ENCODE measurements at regions of chr15 and their contacts with region 1.

Region 1: GRCh38 chr15:99076552-99077308 is 28.1 kb upstream of the SYNM start:
- DNase-seq: peak; percentile 78

Region 2: GRCh38 chr15:98442379-98442833 is 634.3 kb before region 1 on chr15:
- intact Hi-C with region 1: loop called in 1 of 2 experiments (anchors 10 kb)
- DNase-seq: no peak

Region 3: DNA sequence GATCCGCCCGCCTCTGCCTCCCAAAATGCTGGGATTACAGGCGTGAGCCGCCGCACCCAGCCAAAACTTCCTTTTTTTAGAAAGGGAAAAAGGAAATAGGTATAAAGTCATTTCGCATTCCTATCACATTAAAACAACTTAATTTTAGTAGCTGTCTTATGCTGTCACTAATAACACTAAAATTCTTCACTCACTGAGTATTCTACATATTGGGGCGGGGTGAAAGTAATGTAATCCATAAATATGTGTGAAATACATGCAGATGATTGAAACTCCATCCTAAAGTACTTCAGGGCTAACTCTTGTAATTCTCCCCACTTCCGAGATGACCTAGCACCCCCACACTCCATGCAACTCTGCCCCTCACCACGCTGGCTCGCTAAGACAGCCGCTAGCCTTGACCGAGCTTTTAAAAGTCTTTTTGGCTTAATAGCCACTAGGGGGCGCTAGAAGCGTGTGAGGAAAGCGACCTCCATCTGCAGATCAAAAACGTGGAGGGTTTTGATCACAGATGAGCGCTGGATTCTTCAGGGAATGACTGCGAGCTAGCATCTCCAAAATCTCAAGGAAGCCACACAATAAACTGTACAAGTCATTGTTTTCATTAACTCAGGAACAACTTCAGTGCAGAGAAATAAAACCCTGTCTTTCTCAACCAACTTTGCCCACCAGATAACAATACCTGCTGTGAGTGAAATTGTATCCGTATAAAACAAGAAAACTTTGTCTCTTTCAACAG is 557.7 kb before region 1 on chr15:
- intact Hi-C with region 1: loop called (anchors 5 to 10 kb)
- DNase-seq: peak; percentile 72

Region 4: GRCh38 chr15:98525661-98526001 is 551.1 kb before region 1 on chr15:
- intact Hi-C with region 1: loop called in 1 of 2 experiments (anchors 10 kb)
- DNase-seq: peak; percentile 73

Region 5: DNA sequence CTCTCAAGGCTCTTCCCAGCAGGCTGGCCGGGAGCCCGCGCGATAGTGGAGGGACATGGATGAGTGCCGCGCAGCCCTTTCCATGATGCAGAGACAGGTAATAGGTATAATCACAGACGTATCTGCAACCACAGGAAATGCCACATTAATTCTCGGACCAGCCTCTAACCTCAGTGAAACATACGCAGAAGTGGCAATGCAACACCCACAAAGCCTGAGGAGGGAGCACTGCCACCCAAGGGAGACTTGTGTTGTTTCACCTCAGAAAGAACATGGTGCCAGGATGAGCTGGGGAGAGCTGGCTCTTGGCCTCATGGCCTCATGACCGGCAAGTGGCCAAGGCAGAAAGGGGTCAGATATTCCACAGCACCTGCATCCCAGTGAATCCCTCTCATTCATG is 108.2 kb before region 1 on chr15:
- intact Hi-C with region 1: no loop called
- DNase-seq: no peak

Region 6: DNA sequence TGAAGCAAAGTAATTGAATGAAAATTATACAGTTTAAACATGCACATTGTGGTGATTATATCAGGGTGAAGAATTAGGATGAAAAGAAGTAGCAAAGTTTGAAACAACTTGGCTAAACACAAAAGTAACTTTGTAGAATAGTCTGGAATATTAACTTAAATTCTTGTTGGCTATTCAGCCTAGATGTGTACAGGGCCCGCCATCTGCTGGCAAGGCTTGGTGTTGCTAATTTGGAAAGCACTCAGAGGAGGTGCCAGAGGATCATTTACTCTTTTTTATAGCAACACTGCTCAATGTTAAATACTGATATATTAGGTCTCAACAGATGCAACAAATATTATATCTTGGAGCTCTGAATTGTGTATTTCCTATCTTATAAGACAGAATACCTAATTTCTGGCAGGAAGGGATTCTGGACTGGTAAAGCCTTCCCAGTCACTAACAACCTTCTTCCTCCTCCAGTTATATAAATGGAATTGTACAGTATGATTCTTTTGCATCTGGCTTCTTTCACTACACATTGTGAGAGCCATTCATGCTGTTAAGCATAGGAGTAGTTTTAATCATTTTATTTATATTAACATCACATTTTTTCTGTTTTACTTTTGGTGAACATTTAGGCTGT is 136.6 kb after region 1 on chr15:
- intact Hi-C with region 1: no loop called
- DNase-seq: peak; percentile 92